ENCODE measurements at regions of chr15 and their contacts with region 1.

Region 1: GRCh38 chr15:45402162-45402954 is 24.0 kb upstream of the GATM start:
- DNase-seq: peak; percentile 99
- ATAC-seq: peak; percentile 95
- H3K4me3 ChIP-seq: peak overlapping the region; percentile 71
- H3K27ac ChIP-seq: peak overlapping the region; percentile 75
- H3K4me1 ChIP-seq: no peaks in the 10 kb centered on the region
- H3K27me3 ChIP-seq: peaks cover 3% of the 10 kb centered on the region; the same call in 1 of the 2 replicates
- CTCF ChIP-seq: no peak
- POLR2A ChIP-seq: 0 out of 2 replicates have a peak, but pooled peaks have one; percentile 32
- RAD21 ChIP-seq: no peak

Region 2: GRCh38 chr15:45166834-45167630 is 235.3 kb before region 1 on chr15:
- CTCF ChIA-PET with region 1: interaction called, 27 read pairs
- POLR2A ChIA-PET with region 1: interaction called, 3 read pairs
- dilution Hi-C with region 1: no loop called
- in situ Hi-C with region 1: loop called (anchors 5 kb)
- intact Hi-C with region 1: loop called (anchors 1 kb)
- DNase-seq: peak; percentile 75
- ATAC-seq: peak; percentile 85
- H3K4me3 ChIP-seq: peak overlapping the region; percentile 59
- H3K27ac ChIP-seq: peak overlapping the region; percentile 91
- H3K4me1 ChIP-seq: peaks cover 8% of the 10 kb centered on the region
- H3K27me3 ChIP-seq: no peaks in the 10 kb centered on the region
- CTCF ChIP-seq: peak; percentile 65
- POLR2A ChIP-seq: peak; percentile 46; the same call in 1 of the 2 replicates
- RAD21 ChIP-seq: peak; percentile 39

Region 3: DNA sequence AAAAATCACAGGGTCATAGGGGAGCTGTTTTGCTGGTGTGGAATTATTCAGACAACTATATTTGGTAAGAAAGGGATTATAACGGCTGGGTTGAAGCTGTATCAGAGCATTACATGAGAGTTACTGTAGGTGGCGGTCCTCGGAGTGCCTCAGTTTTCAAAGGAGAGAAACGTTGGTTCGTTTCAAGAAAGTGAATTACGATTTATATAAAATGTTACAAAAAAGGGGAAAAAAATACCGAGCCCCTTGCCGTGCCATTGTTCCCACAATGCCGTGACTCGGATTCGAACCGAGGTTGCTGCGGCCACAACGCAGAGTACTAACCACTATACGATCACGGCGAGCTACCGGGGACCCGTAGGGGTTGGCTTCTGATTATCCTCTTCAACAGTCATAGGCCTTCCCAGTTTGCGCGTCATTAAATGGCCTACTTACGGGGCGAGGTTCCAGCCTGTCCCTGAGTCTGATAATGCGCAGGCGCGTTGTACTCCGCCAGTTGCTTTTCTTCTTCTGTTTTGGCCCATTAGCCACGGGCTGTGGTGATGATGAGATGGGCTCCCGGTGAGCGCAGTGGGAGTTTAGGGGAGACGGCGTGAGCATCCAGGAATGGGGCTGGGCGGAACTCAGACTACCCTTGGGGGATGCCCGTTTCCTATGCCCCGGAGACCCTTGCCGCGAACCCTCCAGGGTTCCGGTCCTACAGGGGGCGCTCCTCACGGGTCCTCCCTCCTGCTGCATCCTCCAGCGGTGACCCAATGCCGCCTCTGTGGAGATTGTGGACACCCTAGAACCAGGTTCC is 203.8 kb before region 1 on chr15:
- CTCF ChIA-PET with region 1: interaction called, 7 read pairs
- POLR2A ChIA-PET with region 1: no interaction called
- dilution Hi-C with region 1: no loop called
- in situ Hi-C with region 1: no loop called
- intact Hi-C with region 1: loop called (anchors 1 kb)
- DNase-seq: peak; percentile 96
- ATAC-seq: peak; percentile 69
- H3K4me3 ChIP-seq: peak overlapping the region; percentile 70
- H3K27ac ChIP-seq: peak overlapping the region; percentile 73
- H3K4me1 ChIP-seq: peaks cover 2% of the 10 kb centered on the region; the same call in 1 of the 2 replicates
- H3K27me3 ChIP-seq: peaks cover 1% of the 10 kb centered on the region; the same call in 1 of the 2 replicates
- CTCF ChIP-seq: peak; percentile 69
- POLR2A ChIP-seq: peak; percentile 83
- RAD21 ChIP-seq: peak; percentile 44

Region 4: DNA sequence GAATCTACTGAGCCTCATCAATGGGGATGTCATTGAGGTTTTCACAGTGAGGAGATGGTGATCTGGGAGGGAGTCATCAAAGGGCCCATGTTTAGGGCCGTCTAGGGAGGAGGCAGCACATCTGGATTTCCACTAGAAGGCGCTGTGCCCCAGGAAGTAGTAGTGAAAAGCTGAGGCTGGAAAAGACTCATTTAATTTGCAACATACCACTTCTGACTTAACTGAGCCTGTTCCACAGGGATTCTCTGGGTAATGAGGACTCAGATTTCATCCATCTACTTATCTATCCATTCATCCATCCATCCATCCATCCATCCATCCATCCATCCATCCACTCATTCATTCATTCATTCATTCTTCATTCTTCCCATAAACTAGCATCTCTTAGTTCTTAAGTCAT is 197.2 kb before region 1 on chr15:
- CTCF ChIA-PET with region 1: interaction called, 7 read pairs
- POLR2A ChIA-PET with region 1: no interaction called
- dilution Hi-C with region 1: no loop called
- in situ Hi-C with region 1: no loop called
- intact Hi-C with region 1: loop called (anchors 1 kb)
- DNase-seq: peak; percentile 69
- ATAC-seq: peak; percentile 22; the same call in 1 of the 2 replicates
- H3K4me3 ChIP-seq: no peak overlapping the region
- H3K27ac ChIP-seq: no peak overlapping the region
- H3K4me1 ChIP-seq: no peaks in the 10 kb centered on the region
- H3K27me3 ChIP-seq: no peaks in the 10 kb centered on the region; the same call in 1 of the 2 replicates
- CTCF ChIP-seq: peak; percentile 85
- POLR2A ChIP-seq: no peak
- RAD21 ChIP-seq: peak; percentile 80

Region 5: DNA sequence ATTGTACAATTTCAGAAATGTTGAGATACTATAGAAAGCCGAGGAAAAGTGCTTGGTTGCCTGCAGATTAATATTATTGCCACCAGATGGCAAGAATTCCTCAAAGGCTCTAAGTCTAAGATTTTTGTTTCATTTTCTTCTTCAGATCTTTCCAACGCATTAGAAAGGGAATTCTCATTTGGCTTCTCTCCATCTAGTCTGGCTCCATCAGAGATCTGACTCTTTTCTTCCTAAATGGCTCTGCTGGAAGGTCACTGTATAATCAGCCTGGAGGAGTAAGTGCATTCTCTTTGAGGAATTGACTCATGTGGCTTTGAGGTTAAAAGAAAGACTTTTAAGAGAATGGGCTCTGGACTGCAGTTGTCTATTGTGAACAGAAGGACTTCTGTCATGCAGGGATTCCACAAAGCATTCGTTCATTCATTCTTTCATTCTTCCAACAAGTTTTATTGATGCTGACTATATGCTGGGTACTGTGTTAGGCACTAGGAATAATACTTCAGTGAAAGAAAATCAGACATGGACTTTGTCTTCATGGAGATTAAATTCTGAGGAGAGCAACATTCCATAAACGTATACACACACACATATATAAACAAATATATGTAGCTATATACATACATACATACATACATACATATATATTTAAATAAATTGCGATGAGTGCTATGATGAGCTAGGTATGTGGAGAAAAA is 95.0 kb before region 1 on chr15:
- CTCF ChIA-PET with region 1: interaction called, 3 read pairs
- POLR2A ChIA-PET with region 1: no interaction called
- dilution Hi-C with region 1: no loop called
- in situ Hi-C with region 1: no loop called
- intact Hi-C with region 1: loop called (anchors 1 kb)
- DNase-seq: peak; percentile 59
- ATAC-seq: peak; percentile 81
- H3K4me3 ChIP-seq: peak overlapping the region; percentile 28; the same call in 1 of the 2 replicates
- H3K27ac ChIP-seq: no peak overlapping the region
- H3K4me1 ChIP-seq: no peaks in the 10 kb centered on the region
- H3K27me3 ChIP-seq: peaks cover 2% of the 10 kb centered on the region; the same call in 1 of the 2 replicates
- CTCF ChIP-seq: peak; percentile 50
- POLR2A ChIP-seq: no peak
- RAD21 ChIP-seq: peak; percentile 20; the same call in 1 of the 2 replicates

Region 6: GRCh38 chr15:45587095-45587860 is 184.9 kb after region 1 on chr15 and contains the start of gene BLOC1S6:
- CTCF ChIA-PET with region 1: no interaction called
- POLR2A ChIA-PET with region 1: interaction called, 4 read pairs
- dilution Hi-C with region 1: no loop called
- in situ Hi-C with region 1: no loop called
- intact Hi-C with region 1: loop called (anchors 2 kb)
- DNase-seq: peak; percentile 90
- ATAC-seq: peak; percentile 85
- H3K4me3 ChIP-seq: peak within 1 kb of the TSS; percentile 67
- H3K27ac ChIP-seq: peak within 1 kb of the TSS; percentile 92
- H3K4me1 ChIP-seq: peaks cover 3% of the 10 kb centered on the region; the same call in 1 of the 2 replicates
- H3K27me3 ChIP-seq: no peaks in the 10 kb centered on the region
- CTCF ChIP-seq: no peak
- POLR2A ChIP-seq: peak; percentile 86
- RAD21 ChIP-seq: no peak
- total RNA-seq, gene BLOC1S6: 40.9 and 78.3 TPM in 2 replicates